Spleen (tissue), 13 donors: ENCODE measurements at regions of chr17 and their contacts with region 1.

Region 1: GRCh38 chr17:31842183-31843069 is 16.6 kb downstream of the COPRS start:
- DNase-seq: peak; percentile 83
- H3K4me3 ChIP-seq: peak overlapping the region in 4 of 8 donors; percentile 1 to 20 (median 10)
- H3K27ac ChIP-seq: peak overlapping the region in 5 of 8 donors; percentile 0 to 76 (median 58)
- H3K4me1 ChIP-seq: peaks cover 3 to 21% (median 17%) of the 10 kb centered on the region in 6 donors
- H3K27me3 ChIP-seq: peaks cover 0 to 22% (median 0%) of the 10 kb centered on the region in 7 donors
- CTCF ChIP-seq: peak; percentile 91 to 97 (median 95)
- POLR2A ChIP-seq: no peak

Region 2: GRCh38 chr17:31437720-31438420 is 404.6 kb before region 1 on chr17:
- intact Hi-C with region 1: loop called (anchors 5 kb)
- DNase-seq: no peak
- H3K4me3 ChIP-seq: no peak overlapping the region
- H3K27ac ChIP-seq: no peak overlapping the region
- H3K4me1 ChIP-seq: peaks cover 5 to 19% (median 16%) of the 10 kb centered on the region in 6 donors
- H3K27me3 ChIP-seq: peaks cover 0 to 25% (median 0%) of the 10 kb centered on the region in 7 donors
- CTCF ChIP-seq: no peak
- POLR2A ChIP-seq: no peak

Region 3: DNA sequence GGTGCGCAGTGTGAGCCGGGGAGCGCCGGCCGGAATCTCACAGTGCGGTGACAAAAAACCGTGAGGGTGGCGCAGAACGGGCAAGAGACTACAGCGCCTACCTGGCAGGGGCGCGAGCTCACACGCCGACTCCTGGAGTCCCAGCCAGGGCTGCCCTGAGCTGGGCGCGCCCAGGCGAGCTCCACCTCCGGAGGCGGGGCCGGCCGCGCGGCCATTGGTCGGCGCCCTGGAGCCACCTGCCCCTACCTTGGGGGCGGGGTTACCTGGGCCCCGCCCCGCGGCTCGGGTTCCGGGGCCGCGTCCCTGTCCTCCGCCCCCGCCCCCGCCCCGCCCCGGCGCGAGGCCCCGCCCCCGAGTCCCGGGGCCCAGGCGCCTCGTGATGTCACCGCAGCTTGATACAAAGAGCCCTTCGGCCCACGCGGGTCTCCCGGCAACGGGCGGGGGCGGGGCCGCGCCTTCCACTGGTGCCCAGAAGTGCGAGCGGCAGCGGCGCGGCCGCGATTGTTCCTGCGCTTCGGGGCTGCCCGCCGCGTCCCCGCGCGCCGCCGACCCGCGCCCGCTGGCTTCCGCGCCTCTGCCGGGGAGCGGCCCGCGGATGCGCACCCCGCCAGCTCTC is 354.7 kb before region 1 on chr17:
- intact Hi-C with region 1: no loop called
- DNase-seq: peak; percentile 99
- H3K4me3 ChIP-seq: peak overlapping the region; percentile 46 to 82 (median 67)
- H3K27ac ChIP-seq: peak overlapping the region; percentile 72 to 94 (median 83)
- H3K4me1 ChIP-seq: peaks cover 37 to 59% (median 58%) of the 10 kb centered on the region in 6 donors
- H3K27me3 ChIP-seq: peaks cover 0 to 21% (median 3%) of the 10 kb centered on the region in 7 donors
- CTCF ChIP-seq: peak in 3 of 11 experiments; percentile 25 to 27 (median 27)
- POLR2A ChIP-seq: peak in 2 of 3 donors; percentile 27 to 74

Region 4: GRCh38 chr17:31508288-31509094 is 333.9 kb before region 1 on chr17:
- intact Hi-C with region 1: no loop called
- DNase-seq: peak; percentile 84
- H3K4me3 ChIP-seq: peak overlapping the region in 6 of 8 donors; percentile 3 to 50 (median 14)
- H3K27ac ChIP-seq: peak overlapping the region; percentile 66 to 95 (median 84)
- H3K4me1 ChIP-seq: peaks cover 28 to 59% (median 46%) of the 10 kb centered on the region in 6 donors
- H3K27me3 ChIP-seq: no peaks in the 10 kb centered on the region
- CTCF ChIP-seq: peak in 9 of 11 experiments; percentile 13 to 58 (median 43)
- POLR2A ChIP-seq: peak in 1 of 3 donors; percentile 38

Region 5: GRCh38 chr17:31549525-31550388 is 292.7 kb before region 1 on chr17:
- intact Hi-C with region 1: loop called (anchors 10 kb)
- DNase-seq: peak; percentile 96
- H3K4me3 ChIP-seq: peak overlapping the region; percentile 63 to 92 (median 84)
- H3K27ac ChIP-seq: peak overlapping the region; percentile 86 to 97 (median 92)
- H3K4me1 ChIP-seq: peaks cover 0 to 33% (median 21%) of the 10 kb centered on the region in 6 donors
- H3K27me3 ChIP-seq: no peaks in the 10 kb centered on the region
- CTCF ChIP-seq: peak in 4 of 11 experiments; percentile 15 to 27 (median 24)
- POLR2A ChIP-seq: peak in 1 of 3 donors; percentile 20